ENCODE measurements at regions of chr18 and their contacts with region 1.

Region 1: DNA sequence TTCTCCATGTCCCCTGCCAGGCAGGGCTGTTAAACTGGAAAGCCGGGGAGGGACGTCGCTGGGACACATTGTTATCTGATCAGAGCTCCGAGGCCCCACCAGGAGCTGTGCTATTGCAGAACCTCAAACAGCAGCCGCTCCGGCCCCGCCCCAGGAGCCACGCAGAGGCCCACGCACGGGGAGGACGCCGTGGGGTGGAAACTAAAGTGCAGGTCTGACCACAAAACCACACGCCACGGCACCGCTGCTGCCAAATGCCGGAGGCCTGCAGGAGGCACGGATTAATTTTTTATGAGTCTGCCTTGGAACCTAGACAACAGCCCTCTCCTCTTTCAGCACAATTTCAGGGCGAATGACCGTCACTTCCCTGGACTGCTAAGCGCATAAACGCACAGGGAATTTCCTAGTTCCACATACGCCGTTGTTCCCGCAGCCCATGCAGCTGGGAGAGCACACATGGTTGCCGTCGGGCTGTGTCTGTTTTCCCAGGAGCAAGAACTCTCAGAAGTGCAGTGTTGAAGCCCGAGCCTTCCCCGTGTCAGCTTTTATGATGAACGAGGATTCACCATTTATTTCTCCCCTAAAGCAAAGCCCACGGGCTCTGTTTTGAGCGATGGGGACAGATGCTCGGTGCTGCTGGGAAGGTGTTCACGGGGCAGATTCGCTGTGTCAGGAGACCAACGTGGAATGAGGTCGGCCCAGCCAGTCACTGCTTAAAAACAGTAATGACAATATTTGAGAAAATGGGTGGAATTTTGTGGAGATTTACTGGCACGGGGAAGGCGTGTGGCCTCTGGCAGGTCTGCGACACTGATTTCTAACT is 43.7 kb downstream of the NFATC1 start:
- DNase-seq: peak in 13 of 14 experiments; percentile 10 to 77 (median 41)
- ATAC-seq: peak; percentile 51
- H3K4me3 ChIP-seq: no peak overlapping the region
- H3K4me3 Mint-ChIP-seq: peak overlapping the region; percentile 39
- H3K27ac ChIP-seq: no peak overlapping the region
- H3K27ac Mint-ChIP-seq: peak overlapping the region; percentile 81
- H3K4me1 ChIP-seq: peaks cover 66% of the 10 kb centered on the region
- H3K4me1 Mint-ChIP-seq: peaks cover 56% of the 10 kb centered on the region
- H3K27me3 ChIP-seq: no peaks in the 10 kb centered on the region
- H3K27me3 Mint-ChIP-seq: no peaks in the 10 kb centered on the region
- CTCF ChIP-seq: no peak

Region 2: DNA sequence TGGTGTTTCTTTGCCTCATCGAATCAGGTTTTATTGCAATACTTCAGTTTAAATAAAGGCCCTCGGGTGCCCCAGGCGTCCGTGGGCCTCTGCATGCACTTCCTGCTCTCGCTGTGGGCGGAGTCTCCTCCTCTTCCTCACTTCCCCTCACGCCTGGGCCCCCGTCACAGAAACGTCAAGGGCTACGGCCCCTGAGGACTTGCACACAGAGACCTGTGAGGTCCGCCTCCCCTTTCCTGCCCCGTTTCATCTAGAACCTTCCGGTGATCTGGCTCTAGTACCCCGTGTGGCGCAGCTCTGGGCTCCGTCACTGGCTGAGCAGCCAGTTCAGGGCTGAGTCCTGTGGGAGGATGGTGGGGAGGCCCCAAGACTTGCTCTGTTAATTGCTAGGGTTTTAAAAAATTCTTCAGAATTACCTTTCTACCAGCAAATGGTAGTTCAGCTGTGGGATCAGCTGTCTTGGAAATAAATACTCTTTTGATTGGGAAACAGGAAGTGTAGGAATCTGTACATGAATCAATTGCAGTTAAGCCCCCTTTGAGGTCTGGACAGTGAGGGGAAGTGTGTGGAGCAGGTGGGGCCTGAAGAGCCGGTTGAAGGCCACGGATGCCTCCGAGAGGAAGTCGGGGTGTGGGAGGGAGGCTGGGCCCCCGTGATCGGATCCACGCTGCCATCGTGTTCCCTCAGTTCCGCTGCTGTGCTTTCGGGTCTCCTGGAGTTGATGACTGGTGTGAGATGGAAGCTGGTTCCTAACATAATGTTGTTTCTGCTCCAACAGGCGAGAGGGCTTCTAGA is 33.4 kb before region 1 on chr18:
- CTCF ChIA-PET with region 1: no interaction called
- POLR2A ChIA-PET with region 1: interaction called, 4 read pairs
- intact Hi-C with region 1: loop called in 1 of 2 experiments (anchors 5 kb)
- DNase-seq: peak; percentile 78 to 98 (median 86)
- ATAC-seq: peak; percentile 76
- H3K4me3 ChIP-seq: peak overlapping the region; percentile 40
- H3K4me3 Mint-ChIP-seq: peak overlapping the region; percentile 90
- H3K27ac ChIP-seq: peak overlapping the region; percentile 92 to 97
- H3K27ac Mint-ChIP-seq: peak overlapping the region; percentile 96
- H3K4me1 ChIP-seq: peaks cover 63% of the 10 kb centered on the region
- H3K4me1 Mint-ChIP-seq: peaks cover 56% of the 10 kb centered on the region
- H3K27me3 ChIP-seq: no peaks in the 10 kb centered on the region
- H3K27me3 Mint-ChIP-seq: no peaks in the 10 kb centered on the region
- CTCF ChIP-seq: peak; percentile 16

Region 3: DNA sequence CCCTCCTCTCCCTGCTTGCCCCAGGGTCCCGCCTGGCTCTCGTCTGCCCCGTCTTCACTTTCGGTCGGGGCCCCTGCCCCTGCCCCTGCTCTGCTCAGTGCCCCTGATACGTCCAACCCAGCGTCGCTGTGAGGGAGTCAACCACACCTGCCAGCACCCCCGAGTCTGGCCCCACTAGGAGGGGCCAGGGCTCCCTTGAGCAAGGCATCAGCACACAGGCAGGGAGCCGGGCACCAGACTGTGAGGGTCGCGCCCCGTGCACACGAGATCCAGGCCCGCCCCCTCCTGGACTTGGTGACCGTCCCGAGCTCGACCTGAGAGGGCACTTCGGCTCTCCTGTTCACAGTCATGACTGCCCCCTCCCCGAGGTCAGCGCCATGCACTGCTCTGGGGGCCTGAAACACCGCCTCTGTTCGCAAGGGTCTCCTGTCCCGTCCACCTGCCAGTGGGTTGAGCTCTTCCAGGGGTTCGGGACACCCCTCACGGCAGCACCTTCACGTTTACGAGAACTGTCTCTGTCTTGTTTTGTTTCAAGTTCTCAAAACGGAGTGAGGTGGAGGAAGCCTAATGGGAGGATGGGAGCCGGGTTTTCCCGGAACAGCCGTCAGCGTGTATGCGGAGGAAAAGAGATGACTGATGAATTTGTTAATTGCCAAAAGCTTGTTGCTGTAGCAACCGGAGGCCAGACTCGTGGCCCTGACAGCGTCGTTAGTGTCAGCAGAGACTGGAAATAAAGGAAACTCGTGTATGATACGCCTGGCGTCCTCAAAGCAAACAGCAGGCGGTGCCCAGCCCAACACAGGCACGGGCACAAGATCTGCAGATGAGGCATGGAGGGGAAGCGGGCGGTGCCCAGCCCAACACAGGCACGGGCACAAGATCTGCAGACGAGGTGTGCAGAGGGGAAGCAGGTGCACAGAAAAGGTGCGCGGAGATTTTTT is 310.1 kb after region 1 on chr18:
- CTCF ChIA-PET with region 1: no interaction called
- POLR2A ChIA-PET with region 1: no interaction called
- intact Hi-C with region 1: no loop called
- DNase-seq: no peak
- ATAC-seq: no peak
- H3K4me3 ChIP-seq: no peak overlapping the region
- H3K4me3 Mint-ChIP-seq: no peak overlapping the region
- H3K27ac ChIP-seq: no peak overlapping the region
- H3K27ac Mint-ChIP-seq: no peak overlapping the region
- H3K4me1 ChIP-seq: no peaks in the 10 kb centered on the region
- H3K4me1 Mint-ChIP-seq: no peaks in the 10 kb centered on the region
- H3K27me3 ChIP-seq: no peaks in the 10 kb centered on the region
- H3K27me3 Mint-ChIP-seq: no peaks in the 10 kb centered on the region
- CTCF ChIP-seq: no peak

Measured in CD4-positive, alpha-beta T cell (primary cell).